Lower leg skin (tissue), 4 donors: ENCODE measurements at regions of chr4 and their contacts with region 1.

Region 1: GRCh38 chr4:6147441-6147840 is 52.9 kb downstream of the JAKMIP1 start:
- DNase-seq: no peak
- H3K4me3 ChIP-seq: no peak overlapping the region
- CTCF ChIP-seq: no peak
- POLR2A ChIP-seq: no peak

Region 2: DNA sequence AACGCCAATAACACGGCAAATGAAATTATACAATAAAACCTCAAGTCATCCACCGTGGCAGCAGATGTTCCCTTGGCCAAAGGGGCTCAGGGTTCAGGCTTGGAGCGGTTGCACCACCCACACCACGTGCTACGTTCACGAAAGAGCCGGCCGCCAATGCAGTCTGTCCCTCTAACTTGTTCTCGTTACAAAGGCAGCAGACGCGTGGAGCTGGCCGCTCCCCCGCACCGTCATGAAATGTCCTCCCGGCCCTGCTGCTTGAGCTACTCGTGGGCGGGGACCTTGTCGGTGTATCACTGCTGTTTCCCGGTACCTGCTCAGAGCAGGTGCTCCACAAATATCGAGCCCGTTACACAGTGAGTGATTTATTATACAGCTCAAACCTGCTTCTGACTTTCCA is 391.1 kb after region 1 on chr4:
- intact Hi-C with region 1: loop called (anchors 5 kb)
- DNase-seq: no peak
- H3K4me3 ChIP-seq: no peak overlapping the region
- CTCF ChIP-seq: no peak
- POLR2A ChIP-seq: no peak